ENCODE measurements at regions of chr10 and their contacts with region 1.

Region 1: DNA sequence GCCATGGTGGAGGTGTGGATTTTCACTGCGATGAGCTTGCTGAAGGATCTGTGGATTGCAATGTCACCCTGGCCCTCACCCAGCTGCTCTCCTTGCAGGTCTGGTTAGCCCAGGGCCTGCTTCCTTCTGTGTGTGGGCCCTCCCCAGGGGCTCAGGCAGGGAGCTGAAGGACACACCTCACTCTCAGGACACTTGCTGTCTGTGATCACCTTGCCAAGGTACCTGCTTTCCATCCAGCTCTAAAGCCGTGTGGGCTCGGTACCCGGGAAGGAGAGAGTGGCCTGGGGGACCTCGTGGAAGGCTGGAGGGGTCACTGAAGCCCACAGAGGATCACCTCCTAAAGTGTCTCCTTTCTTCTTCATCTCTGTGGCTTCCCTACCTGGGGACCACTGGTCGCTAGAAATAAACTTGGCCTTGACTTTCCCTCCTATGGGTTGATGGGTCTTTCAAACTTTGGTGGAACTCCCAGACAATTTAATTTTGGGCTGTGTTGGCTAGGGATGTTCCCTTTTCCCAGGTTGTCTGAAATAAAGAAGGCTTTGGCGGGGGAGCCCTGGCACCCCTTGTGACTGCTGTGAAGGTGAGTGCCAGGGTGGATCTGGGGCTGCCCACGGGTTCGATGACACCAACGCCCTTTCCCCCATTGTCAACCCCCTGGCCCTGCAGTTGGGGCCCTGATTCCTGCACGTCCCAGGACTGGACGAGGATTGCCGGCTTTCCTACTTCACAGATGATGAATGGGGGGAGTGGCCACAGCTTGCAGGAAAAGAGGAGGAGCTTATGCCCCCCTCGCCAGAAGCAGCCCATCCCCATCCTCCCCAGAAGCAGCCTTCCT is 331.0 kb downstream of the ADARB2 start:
- DNase-seq: peak in 3 of 42 donors; percentile 17 to 31 (median 24)

Region 2: GRCh38 chr10:1240341-1240775 is 166.0 kb before region 1 on chr10:
- intact Hi-C with region 1: no loop called
- DNase-seq: peak in 31 of 42 donors; percentile 17 to 74 (median 45)

Region 3: DNA sequence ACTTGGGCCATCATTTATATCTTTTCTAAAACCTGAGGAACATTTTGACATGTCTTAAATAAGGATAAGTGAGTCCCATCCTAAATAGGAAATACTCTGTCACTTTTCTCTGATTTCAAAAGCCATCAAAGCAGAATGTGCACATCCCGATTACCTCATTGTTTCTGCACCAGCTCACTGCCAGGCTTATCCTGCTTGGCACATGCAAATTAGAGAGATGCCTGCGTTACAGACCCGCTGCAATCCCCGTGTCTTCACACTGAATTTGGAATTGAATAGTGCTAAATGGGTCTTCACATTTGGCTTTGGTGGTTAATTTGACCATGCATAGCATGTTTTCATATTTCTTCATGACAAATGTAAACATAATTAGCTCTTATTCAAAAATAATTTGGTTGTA is 70.7 kb before region 1 on chr10:
- intact Hi-C with region 1: loop called (anchors 5 kb)
- DNase-seq: peak in 2 of 42 donors; percentile 8 to 36